ENCODE measurements at regions of chrX and their contacts with region 1.

Region 1: DNA sequence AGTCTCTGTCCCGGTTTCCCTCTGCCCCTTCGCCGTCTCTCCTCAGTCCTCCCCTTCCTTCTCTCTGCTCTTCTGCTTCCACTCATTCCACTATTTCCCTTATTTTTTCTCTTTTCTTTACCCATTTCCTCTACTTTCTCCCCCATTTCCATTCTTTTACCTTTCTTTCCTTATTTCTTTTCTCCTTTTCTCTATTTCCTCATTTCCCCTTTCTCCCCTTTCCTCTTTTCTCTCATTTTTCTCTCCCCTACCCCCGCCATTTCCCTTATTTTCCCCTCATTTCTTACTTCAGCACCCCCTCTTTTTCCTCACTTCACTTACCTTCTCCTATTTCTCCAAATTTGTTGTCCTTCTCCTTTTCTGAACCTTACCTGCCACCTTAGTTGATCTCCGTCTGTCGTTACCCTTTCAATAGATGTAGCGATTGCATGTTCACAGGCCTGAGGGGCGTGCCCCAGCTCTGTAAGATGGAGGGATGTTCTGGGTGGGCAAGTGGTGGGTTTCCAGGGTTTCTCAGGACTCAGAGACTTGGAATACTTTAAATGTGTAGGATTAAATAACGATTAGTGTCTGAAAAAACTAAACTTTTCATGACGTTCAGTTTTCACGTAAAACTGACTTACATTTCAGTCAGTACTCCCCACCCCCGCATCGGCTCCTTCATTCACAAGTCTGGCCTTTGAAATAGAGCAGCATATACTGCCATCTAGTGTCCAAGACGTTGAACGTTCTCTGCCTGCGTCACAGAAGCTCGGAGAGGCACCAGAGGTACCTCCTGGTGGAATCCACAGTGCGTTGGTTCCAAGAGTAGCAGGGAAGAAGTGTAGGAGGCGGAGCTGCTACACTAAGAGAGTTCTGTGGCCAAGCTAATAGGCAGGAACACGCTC is 641 bp upstream of the NCBP2L start:
- DNase-seq: peak; percentile 58
- H3K4me3 Mint-ChIP-seq: peak overlapping the region; percentile 82
- H3K27ac Mint-ChIP-seq: peak overlapping the region; percentile 9
- H3K4me1 Mint-ChIP-seq: peaks cover 12% of the 10 kb centered on the region
- H3K27me3 Mint-ChIP-seq: peaks cover 19% of the 10 kb centered on the region

Region 2: GRCh38 chrX:107537815-107538214 is 239.1 kb before region 1 on chrX:
- intact Hi-C with region 1: loop called (anchors 5 kb)
- DNase-seq: peak; percentile 8
- H3K4me3 Mint-ChIP-seq: no peak overlapping the region
- H3K27ac Mint-ChIP-seq: no peak overlapping the region
- H3K4me1 Mint-ChIP-seq: no peaks in the 10 kb centered on the region
- H3K27me3 Mint-ChIP-seq: peaks cover 9% of the 10 kb centered on the region

Region 3: GRCh38 chrX:107654872-107655761 is 121.8 kb before region 1 on chrX:
- intact Hi-C with region 1: loop called (anchors 1 kb)
- DNase-seq: peak; percentile 46
- H3K4me3 Mint-ChIP-seq: no peak overlapping the region
- H3K27ac Mint-ChIP-seq: no peak overlapping the region
- H3K4me1 Mint-ChIP-seq: peaks cover 5% of the 10 kb centered on the region
- H3K27me3 Mint-ChIP-seq: no peaks in the 10 kb centered on the region

Region 4: DNA sequence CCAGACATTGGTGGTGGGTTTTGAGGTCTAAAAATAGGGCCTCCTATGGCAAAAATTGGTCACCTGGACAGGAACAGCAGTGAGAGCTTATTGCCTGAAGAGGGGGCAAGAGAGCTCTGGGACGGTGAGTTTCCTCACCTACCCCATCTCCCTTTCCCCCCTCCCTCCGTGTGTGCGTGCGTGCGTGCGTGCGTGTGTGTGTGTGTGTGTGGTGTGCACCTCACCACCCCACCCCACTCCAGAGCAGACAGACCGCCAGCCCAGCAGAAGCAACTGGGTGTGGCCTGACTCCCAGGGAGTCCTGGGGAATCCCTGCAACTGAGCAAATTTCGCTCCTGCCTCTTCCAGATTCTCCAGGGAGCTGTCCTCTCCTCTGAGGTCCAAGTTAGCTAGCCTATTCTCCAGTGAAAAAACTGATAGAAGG is 103.9 kb before region 1 on chrX:
- intact Hi-C with region 1: loop called (anchors 2 kb)
- DNase-seq: peak; percentile 74
- H3K4me3 Mint-ChIP-seq: peak overlapping the region; percentile 54
- H3K27ac Mint-ChIP-seq: peak overlapping the region; percentile 99
- H3K4me1 Mint-ChIP-seq: peaks cover 37% of the 10 kb centered on the region
- H3K27me3 Mint-ChIP-seq: no peaks in the 10 kb centered on the region

Region 5: DNA sequence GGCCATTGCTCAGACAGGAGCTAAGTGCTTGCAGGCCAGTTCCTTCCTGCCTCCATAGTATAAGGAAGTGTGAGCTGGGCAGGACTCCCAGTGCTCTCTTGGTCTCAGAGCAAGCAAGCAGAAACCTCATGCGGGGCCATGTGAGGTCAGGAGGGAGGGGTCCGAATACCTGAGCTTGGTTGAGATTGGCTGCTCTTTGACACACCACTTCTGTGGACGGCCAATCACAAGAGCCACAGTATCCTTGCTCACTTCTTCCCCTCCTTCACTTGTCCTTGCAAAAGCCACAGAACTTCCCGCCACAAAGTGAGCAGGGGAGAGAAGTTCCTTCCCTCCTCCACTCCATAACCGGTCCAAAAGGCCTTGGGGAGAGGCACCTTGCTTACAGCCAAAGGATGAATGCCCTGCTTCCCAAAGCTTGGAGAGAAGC is 91.9 kb before region 1 on chrX:
- intact Hi-C with region 1: no loop called
- DNase-seq: no peak
- H3K4me3 Mint-ChIP-seq: no peak overlapping the region
- H3K27ac Mint-ChIP-seq: no peak overlapping the region
- H3K4me1 Mint-ChIP-seq: peaks cover 25% of the 10 kb centered on the region
- H3K27me3 Mint-ChIP-seq: no peaks in the 10 kb centered on the region

Region 6: GRCh38 chrX:107716816-107717700 is 59.8 kb before region 1 on chrX:
- intact Hi-C with region 1: loop called (anchors 2 kb)
- DNase-seq: peak; percentile 85
- H3K4me3 Mint-ChIP-seq: peak overlapping the region; percentile 93
- H3K27ac Mint-ChIP-seq: peak overlapping the region; percentile 87
- H3K4me1 Mint-ChIP-seq: peaks cover 39% of the 10 kb centered on the region
- H3K27me3 Mint-ChIP-seq: no peaks in the 10 kb centered on the region

Region 7: GRCh38 chrX:107826238-107827029 is 49.5 kb after region 1 on chrX:
- intact Hi-C with region 1: loop called (anchors 1 kb)
- DNase-seq: no peak
- H3K4me3 Mint-ChIP-seq: peak overlapping the region; percentile 81
- H3K27ac Mint-ChIP-seq: peak overlapping the region; percentile 67
- H3K4me1 Mint-ChIP-seq: peaks cover 25% of the 10 kb centered on the region
- H3K27me3 Mint-ChIP-seq: peaks cover 14% of the 10 kb centered on the region

Region 8: DNA sequence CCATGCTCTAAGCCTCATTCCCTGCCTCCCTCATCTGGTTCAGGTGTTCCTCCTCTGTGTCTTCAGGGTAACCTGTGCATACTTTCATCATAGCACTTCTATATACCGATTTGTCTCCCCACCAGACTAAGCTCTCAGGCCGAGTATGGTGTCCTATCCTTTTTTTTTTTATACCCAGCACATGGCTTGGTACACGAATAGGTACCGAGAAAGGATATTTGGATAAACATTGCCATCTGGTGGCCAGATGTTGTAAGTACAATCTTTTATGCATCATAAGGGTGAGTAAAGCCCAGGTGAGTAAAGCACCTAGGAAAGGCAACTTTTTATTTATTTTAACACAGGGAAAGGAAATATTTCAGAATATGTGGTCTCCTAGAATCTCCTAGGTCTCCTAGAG is 117.1 kb after region 1 on chrX:
- intact Hi-C with region 1: loop called (anchors 5 kb)
- DNase-seq: no peak
- H3K4me3 Mint-ChIP-seq: no peak overlapping the region
- H3K27ac Mint-ChIP-seq: no peak overlapping the region
- H3K4me1 Mint-ChIP-seq: no peaks in the 10 kb centered on the region
- H3K27me3 Mint-ChIP-seq: peaks cover 1% of the 10 kb centered on the region

Measured in activated T-helper 2 cell treated with anti-CD3 and anti-CD28 coated beads, Interferon-gamma antibody, Interleukin-2, Interleukin-4, amounts not matched to agents 10 μg/mL and 5 μg/mL and 100 μg/mL, durations not matched to agents 14 hours and 24 hours and 36 hours (primary cell).